ENCODE measurements at regions of chr4 and their contacts with region 1.

Region 1: DNA sequence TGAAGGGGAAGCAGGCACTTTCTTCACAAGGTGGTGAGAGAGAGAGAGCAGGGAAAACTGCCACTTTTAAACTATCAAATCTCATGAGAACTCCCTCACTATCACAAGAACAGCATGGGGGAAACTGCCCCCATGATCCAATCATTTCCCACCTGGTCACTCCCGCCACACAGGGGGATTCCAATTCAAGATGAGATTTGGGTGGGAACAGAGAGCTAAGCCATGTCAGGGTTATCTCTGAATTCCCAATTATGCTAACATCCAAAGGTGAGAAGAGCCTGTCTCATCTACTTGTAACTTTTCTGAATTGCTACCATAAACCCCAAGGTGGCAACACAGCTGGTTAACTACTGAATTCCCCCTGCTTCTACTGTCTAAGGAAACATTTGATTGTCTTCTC is 758.5 kb downstream of the ADGRL3 start:
- DNase-seq: no peak

Region 2: DNA sequence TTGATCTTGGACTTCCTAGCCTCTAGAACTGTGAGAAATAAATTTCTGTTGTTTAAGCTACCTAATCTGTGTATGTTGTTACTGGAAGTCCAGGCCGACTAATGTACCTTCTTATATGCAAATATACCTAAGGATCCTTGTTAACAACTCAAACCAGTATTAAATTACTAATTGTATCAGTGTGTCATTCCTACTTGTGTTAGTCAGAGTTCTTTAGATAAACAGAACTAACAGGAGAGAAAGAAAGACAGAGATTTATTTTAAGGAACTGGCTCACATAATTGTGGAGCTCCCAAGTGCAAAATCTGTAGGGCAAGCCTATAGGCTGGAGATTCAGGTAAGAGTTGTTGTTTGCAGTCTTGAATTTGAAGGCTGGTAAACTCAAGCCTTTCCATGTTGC is 638.4 kb before region 1 on chr4:
- intact Hi-C with region 1: loop called in 1 of 2 experiments (anchors 10 kb)
- DNase-seq: no peak

Region 3: DNA sequence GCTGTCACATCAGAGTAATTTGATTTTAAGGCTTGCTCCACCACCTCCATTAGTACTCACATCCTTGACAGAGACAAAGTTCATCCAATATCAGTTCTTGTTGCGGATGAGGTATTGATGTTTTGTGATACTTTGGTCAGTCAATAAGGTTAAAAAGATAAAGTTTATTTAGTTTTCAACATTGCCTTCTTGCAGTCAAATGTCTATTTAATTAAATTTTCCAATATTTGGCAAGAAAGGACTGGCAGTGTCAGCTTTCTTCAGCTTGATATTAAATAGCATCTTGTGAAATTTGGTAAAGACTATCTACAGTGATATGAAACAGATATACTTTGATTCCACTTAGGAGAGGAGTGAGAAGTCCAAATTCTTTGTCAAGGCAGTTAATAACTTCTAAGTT is 265.1 kb before region 1 on chr4:
- intact Hi-C with region 1: no loop called
- DNase-seq: no peak

Region 4: GRCh38 chr4:61994036-61994435 is 35.4 kb after region 1 on chr4:
- intact Hi-C with region 1: no loop called
- DNase-seq: no peak

Region 5: GRCh38 chr4:62018537-62018936 is 59.9 kb after region 1 on chr4:
- intact Hi-C with region 1: no loop called
- DNase-seq: no peak

Measured in posterior vena cava (tissue), 2 donors.